CD4-positive, alpha-beta memory T cell (primary cell): ENCODE measurements at regions of chr17 and their contacts with region 1.

Region 1: DNA sequence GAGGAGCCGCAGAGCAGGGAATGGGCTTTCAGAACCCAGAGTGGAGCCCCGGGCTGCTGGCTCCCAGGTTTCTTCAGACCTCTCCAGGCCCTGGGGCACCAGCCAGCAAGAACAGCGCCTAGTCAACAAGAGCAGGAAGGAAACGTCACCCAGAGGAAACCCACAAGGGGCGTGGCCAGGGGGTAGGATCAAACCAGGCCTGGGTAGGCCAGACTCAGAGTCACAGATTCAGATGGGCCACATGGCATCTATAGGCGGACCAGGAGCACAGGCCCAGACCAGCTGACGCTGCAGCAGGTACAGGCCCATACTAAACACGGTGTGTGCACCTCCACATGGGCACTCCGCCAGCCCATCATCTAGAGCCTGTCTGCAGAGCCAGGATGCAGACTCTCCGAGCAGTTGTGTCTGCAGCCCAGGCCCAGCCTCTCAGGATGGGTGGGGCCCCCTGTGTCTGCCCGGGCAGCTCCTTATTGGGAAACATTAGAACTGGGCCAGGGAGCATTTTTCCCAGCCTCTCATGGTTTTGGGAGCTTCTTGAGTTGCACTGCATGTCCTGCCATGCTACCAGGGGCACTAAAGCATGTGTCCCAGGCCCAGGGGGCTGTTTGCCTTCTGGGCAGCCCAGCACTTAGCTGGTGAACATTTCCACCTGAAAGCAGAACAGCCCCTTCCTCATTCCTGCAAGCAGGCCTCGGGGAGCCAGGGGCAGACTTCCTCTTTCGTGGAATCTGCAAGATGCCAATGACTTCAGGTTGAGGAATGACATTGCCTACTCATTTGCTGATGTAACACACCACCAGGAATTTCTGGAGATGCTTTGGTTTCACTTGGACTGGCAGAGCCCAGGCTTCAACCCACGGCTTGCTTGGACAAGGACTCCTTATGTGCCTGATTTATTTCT is at the start of gene NLRP1:
- DNase-seq: peak; percentile 94 to 99 (median 95)
- H3K4me3 ChIP-seq: peak within 1 kb of the TSS; percentile 65 to 99
- H3K4me3 Mint-ChIP-seq: peak within 1 kb of the TSS; percentile 95 to 98 (median 97)
- H3K27ac ChIP-seq: peak within 1 kb of the TSS; percentile 88
- H3K27ac Mint-ChIP-seq: peak within 1 kb of the TSS; percentile 95 to 99 (median 98)
- H3K4me1 ChIP-seq: peaks cover 70% of the 10 kb centered on the region
- H3K4me1 Mint-ChIP-seq: peaks cover 41 to 86% (median 63%) of the 10 kb centered on the region in 4 donors
- H3K27me3 ChIP-seq: no peaks in the 10 kb centered on the region
- H3K27me3 Mint-ChIP-seq: no peaks in the 10 kb centered on the region
- total RNA-seq, gene NLRP1: 280 to 292 TPM

Region 2: GRCh38 chr17:5536866-5537650 is 47.6 kb before region 1 on chr17:
- CTCF ChIA-PET with region 1: no interaction called
- POLR2A ChIA-PET with region 1: no interaction called
- intact Hi-C with region 1: no loop called
- DNase-seq: no peak
- H3K4me3 ChIP-seq: no peak overlapping the region
- H3K4me3 Mint-ChIP-seq: no peak overlapping the region
- H3K27ac ChIP-seq: no peak overlapping the region
- H3K27ac Mint-ChIP-seq: peak overlapping the region in 3 of 7 donors; percentile 44 to 68 (median 48)
- H3K4me1 ChIP-seq: no peaks in the 10 kb centered on the region
- H3K4me1 Mint-ChIP-seq: no peaks in the 10 kb centered on the region
- H3K27me3 ChIP-seq: no peaks in the 10 kb centered on the region
- H3K27me3 Mint-ChIP-seq: no peaks in the 10 kb centered on the region

Region 3: DNA sequence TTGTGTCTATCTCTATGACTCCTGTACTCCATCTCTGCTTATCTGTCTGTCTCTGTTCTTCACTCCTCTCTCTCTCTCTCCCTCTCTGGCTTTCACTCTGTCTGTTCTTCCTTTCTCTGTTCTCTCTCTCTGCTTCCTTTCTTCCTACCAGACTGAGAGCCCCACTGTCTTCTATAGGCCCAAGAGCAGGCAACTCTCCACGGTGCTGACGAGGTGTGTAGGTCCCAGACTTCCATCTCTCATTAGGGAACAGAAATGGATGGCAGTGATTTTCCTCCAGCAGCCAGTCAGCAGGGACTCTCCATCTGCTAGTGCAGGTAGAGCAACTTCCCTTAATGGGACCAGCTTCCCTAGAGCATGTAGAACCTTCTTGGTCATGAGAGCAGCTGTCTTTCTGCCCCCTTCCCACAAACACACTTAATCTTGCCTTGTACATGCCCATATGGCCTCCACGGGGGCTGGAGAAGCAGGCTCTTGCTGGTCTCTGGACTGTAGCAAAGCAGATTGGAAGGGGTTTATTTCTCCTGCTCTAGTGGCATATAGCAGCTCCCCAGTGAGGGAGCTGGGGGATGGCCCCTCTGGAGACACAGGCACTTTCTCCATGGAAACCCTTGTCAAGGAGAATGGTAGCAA is 47.4 kb after region 1 on chr17:
- CTCF ChIA-PET with region 1: no interaction called
- POLR2A ChIA-PET with region 1: no interaction called
- intact Hi-C with region 1: no loop called
- DNase-seq: no peak
- H3K4me3 ChIP-seq: no peak overlapping the region
- H3K4me3 Mint-ChIP-seq: no peak overlapping the region
- H3K27ac ChIP-seq: no peak overlapping the region
- H3K27ac Mint-ChIP-seq: no peak overlapping the region
- H3K4me1 ChIP-seq: no peaks in the 10 kb centered on the region
- H3K4me1 Mint-ChIP-seq: peaks cover 0 to 1% (median 0%) of the 10 kb centered on the region in 4 donors
- H3K27me3 ChIP-seq: no peaks in the 10 kb centered on the region
- H3K27me3 Mint-ChIP-seq: peaks cover 22 to 33% of the 10 kb centered on the region in 2 donors

Region 4: DNA sequence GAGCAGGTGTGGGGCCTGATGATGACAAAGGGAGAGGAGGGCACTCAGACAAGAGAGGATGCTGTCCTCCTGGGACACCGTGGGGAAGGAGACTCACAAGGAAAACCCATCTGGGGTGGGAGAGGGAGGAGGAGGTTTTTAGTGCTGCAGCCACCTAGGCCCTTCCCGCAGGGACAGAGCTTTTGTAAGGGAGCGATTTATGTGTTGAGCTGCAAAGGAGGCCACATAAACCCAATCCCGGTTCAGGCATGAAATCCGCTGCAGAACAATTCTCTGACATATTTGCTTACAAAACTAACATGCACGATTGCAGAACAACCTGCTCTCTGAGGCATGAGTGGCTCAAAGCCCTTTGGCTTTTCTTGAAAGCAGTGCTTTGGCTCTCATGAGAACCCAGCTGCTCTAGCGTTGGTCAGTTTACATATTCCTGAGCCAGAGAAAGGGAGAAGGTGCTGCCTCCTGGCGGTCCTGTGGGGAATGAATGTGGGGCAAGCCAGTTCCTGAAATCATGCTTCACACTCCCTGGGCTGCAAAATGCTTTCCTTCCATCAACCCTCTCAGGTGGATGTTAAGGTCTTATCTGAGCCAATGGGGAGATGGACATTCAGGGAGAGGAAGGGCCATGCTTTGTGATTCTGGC is 122.1 kb after region 1 on chr17:
- CTCF ChIA-PET with region 1: interaction called, 36 read pairs
- POLR2A ChIA-PET with region 1: no interaction called
- intact Hi-C with region 1: loop called (anchors 1 kb)
- DNase-seq: peak in 4 of 5 donors; percentile 29 to 45 (median 40)
- H3K4me3 ChIP-seq: no peak overlapping the region
- H3K4me3 Mint-ChIP-seq: no peak overlapping the region
- H3K27ac ChIP-seq: no peak overlapping the region
- H3K27ac Mint-ChIP-seq: no peak overlapping the region
- H3K4me1 ChIP-seq: no peaks in the 10 kb centered on the region
- H3K4me1 Mint-ChIP-seq: no peaks in the 10 kb centered on the region
- H3K27me3 ChIP-seq: no peaks in the 10 kb centered on the region
- H3K27me3 Mint-ChIP-seq: peaks cover 14 to 28% of the 10 kb centered on the region in 2 donors

Region 5: DNA sequence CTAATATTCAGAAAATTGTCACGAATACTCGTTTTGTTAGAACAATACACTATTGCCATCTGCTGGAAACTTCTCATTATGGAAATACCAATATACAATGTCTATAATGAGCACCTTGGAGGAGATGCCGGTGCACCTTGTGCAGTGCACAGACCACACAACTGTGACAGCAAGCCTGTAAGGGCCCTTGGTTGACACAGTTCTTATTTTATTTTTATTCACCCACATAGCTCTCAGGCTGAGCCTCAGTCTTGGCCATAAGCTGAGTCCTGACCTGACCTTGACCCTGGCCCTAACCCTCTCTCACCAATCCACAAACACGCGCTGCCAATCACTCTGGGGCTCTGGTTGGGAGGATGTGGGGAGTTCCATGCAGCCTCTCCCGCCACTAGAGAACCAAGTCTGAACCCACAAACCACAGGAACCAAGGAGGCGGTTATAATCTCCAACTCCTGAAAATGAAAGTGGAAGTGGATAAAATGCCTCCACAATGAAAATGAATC is 842.7 kb after region 1 on chr17:
- CTCF ChIA-PET with region 1: interaction called, 20 read pairs
- POLR2A ChIA-PET with region 1: interaction called, 4 read pairs
- intact Hi-C with region 1: loop called (anchors 1 kb)
- DNase-seq: peak; percentile 55 to 74 (median 64)
- H3K4me3 ChIP-seq: no peak overlapping the region
- H3K4me3 Mint-ChIP-seq: peak overlapping the region in 7 of 8 donors; percentile 40 to 79 (median 63)
- H3K27ac ChIP-seq: no peak overlapping the region
- H3K27ac Mint-ChIP-seq: peak overlapping the region; percentile 32 to 80 (median 54)
- H3K4me1 ChIP-seq: peaks cover 21% of the 10 kb centered on the region
- H3K4me1 Mint-ChIP-seq: peaks cover 10 to 22% (median 13%) of the 10 kb centered on the region in 4 donors
- H3K27me3 ChIP-seq: no peaks in the 10 kb centered on the region
- H3K27me3 Mint-ChIP-seq: peaks cover 0 to 5% of the 10 kb centered on the region in 2 donors

Region 6: DNA sequence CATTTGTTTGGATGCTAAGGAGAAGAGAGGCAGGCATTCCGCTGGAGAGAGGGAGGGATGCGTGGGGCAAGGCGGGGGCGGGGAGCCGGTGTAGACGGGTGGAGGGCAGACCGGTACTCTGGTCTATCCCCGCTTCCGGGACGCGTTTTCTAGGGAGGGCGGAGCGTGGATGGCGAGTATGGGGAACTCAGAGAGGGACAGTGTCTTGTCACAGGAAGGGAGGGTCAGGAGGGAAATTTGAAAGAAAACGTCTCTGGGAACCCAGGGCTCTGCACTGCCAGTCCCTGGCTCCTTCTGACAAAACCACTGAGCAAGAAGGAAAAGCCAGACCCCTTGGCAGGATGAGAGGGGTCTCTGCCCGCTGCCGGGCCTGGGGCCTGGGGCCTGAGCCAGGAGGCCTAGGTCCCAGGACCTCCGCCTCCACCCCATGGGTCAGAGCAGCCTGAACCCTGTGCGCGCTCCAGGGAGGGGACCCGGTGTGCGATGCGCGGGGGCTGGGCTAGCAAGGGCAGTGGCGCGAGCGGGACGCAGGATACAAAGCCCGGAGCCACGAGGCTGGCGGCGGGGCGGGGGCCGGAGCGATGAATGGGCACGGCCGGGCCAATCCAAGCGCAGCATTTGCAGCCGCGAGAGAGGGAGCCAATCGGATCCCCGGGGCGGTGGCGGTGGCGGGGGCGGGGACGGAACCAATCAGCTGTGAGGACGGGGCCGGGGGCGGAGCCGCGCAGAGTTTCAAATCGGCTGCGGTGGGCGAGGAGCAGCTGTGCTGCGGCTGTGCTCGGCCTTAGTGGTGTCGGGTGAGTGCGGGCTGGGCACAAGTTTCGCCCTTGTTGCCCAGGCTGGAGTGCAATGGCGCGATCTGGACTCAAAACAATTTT is 859.3 kb after region 1 on chr17 and contains the start of gene PIMREG:
- CTCF ChIA-PET with region 1: interaction called, 4 read pairs
- POLR2A ChIA-PET with region 1: interaction called, 14 read pairs
- intact Hi-C with region 1: no loop called
- DNase-seq: peak; percentile 82 to 91 (median 83)
- H3K4me3 ChIP-seq: peak within 1 kb of the TSS; percentile 69 to 93
- H3K4me3 Mint-ChIP-seq: peak within 1 kb of the TSS; percentile 91 to 94 (median 92)
- H3K27ac ChIP-seq: peak within 1 kb of the TSS; percentile 17
- H3K27ac Mint-ChIP-seq: peak within 1 kb of the TSS; percentile 68 to 96 (median 87)
- H3K4me1 ChIP-seq: peaks cover 5% of the 10 kb centered on the region
- H3K4me1 Mint-ChIP-seq: peaks cover 9 to 16% (median 12%) of the 10 kb centered on the region in 4 donors
- H3K27me3 ChIP-seq: no peaks in the 10 kb centered on the region
- H3K27me3 Mint-ChIP-seq: peaks cover 6 to 8% of the 10 kb centered on the region in 2 donors
- total RNA-seq, gene PIMREG: not detected

Region 7: GRCh38 chr17:7014261-7014994 is 1429.8 kb after region 1 on chr17:
- CTCF ChIA-PET with region 1: no interaction called
- POLR2A ChIA-PET with region 1: no interaction called
- intact Hi-C with region 1: loop called (anchors 10 kb)
- DNase-seq: peak; percentile 98 to 99 (median 98)
- H3K4me3 ChIP-seq: peak overlapping the region; percentile 61 to 98
- H3K4me3 Mint-ChIP-seq: peak overlapping the region; percentile 92 to 98 (median 97)
- H3K27ac ChIP-seq: peak overlapping the region; percentile 96
- H3K27ac Mint-ChIP-seq: peak overlapping the region; percentile 98 to 100 (median 100)
- H3K4me1 ChIP-seq: peaks cover 69% of the 10 kb centered on the region
- H3K4me1 Mint-ChIP-seq: peaks cover 42 to 94% (median 61%) of the 10 kb centered on the region in 4 donors
- H3K27me3 ChIP-seq: no peaks in the 10 kb centered on the region
- H3K27me3 Mint-ChIP-seq: no peaks in the 10 kb centered on the region